ENCODE measurements at regions of chr6 and their contacts with region 1.

Region 1: DNA sequence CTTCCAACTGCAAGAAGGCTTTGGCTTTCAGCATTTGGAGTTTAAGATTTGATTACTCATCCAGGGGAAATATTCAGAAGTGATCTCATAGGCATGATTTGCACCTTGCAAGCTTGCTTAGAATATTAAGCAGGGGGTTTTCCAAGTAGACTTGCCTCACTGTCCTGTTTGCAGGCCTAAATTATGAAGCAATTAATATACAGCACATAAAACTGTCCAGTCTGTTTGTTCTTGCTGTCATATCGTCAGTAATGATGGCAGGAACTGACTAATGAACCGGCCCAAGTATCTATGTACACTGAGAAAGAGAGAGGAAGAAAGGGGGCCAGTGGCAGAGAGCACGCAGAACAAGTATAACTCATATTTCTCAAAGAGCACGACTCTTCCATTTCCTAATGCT is 212.5 kb upstream of the SUPT3H start:
- DNase-seq: no peak
- H3K4me3 Mint-ChIP-seq: no peak overlapping the region
- H3K27ac Mint-ChIP-seq: peak overlapping the region; percentile 53
- H3K4me1 Mint-ChIP-seq: peaks cover 94% of the 10 kb centered on the region
- H3K27me3 Mint-ChIP-seq: no peaks in the 10 kb centered on the region

Region 2: DNA sequence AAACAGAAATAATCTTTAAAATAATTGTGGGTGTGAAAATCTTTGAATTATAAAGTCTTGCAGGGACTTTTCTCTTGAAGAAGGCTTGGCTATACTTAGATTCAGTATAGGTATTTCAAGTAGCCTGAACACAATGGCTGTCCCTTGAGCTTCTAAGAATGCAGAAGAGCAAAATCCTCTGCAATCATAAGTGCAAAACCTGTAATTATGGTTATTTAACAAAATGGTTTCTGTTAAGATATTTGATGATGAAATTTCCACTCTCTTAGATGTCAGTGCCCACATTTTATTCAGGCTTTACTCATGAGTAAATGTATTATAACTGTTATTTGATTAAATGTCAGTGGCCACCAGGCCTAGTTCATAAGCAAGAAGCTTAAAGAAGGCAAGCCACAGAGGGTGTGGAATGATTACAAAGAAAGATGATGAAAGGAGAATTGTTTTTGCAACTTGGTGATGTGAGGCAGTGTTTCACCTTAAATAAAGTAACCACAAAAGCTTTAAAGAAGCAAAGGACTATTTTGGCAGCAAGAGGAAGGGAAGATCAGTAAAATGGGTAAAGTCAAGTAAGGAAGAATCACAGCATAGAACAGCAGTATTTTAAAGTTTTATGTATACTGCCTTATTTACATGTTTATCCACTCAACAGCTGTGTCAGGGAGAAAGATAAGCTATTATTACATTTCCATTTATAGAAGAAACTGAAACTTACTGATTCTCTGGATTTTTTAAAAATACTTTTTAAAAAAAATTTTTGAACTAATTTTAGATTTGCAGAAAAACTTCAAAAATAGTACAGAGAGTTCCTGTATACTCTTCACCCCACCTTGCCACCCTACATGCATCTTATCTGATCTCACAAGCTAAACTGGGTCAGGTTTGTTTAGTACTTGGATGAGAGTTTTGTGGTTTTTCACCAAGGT is 613.2 kb before region 1 on chr6:
- CTCF ChIA-PET with region 1: no interaction called
- POLR2A ChIA-PET with region 1: no interaction called
- intact Hi-C with region 1: no loop called
- DNase-seq: no peak
- H3K4me3 Mint-ChIP-seq: no peak overlapping the region
- H3K27ac Mint-ChIP-seq: peak overlapping the region; percentile 33
- H3K4me1 Mint-ChIP-seq: peaks cover 39% of the 10 kb centered on the region
- H3K27me3 Mint-ChIP-seq: no peaks in the 10 kb centered on the region

Region 3: DNA sequence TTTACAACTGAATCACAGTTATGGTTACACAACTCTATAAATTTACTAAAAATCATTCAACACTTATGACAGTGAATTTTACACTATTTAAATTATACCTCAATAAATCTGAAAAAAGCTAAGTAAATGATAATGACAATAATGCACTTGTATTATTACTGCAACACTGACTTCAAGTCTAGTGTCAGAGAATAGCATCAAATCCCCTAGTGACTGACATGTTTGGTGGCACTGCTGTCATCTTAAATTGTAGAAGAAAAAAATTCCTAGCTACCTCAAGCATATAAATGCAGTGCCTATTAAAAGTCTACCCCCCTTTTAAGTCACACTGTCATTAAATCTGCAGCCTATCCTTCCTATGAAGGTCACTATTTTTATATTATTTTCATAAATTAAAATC is 451.5 kb before region 1 on chr6:
- CTCF ChIA-PET with region 1: no interaction called
- POLR2A ChIA-PET with region 1: no interaction called
- intact Hi-C with region 1: no loop called
- DNase-seq: no peak
- H3K4me3 Mint-ChIP-seq: no peak overlapping the region
- H3K27ac Mint-ChIP-seq: no peak overlapping the region
- H3K4me1 Mint-ChIP-seq: no peaks in the 10 kb centered on the region
- H3K27me3 Mint-ChIP-seq: no peaks in the 10 kb centered on the region

Region 4: GRCh38 chr6:45479834-45480751 is 110.1 kb before region 1 on chr6:
- CTCF ChIA-PET with region 1: no interaction called
- POLR2A ChIA-PET with region 1: no interaction called
- intact Hi-C with region 1: loop called (anchors 1 kb)
- DNase-seq: no peak
- H3K4me3 Mint-ChIP-seq: no peak overlapping the region
- H3K27ac Mint-ChIP-seq: no peak overlapping the region
- H3K4me1 Mint-ChIP-seq: peaks cover 17% of the 10 kb centered on the region
- H3K27me3 Mint-ChIP-seq: no peaks in the 10 kb centered on the region

Region 5: GRCh38 chr6:45812922-45813321 is 222.7 kb after region 1 on chr6:
- CTCF ChIA-PET with region 1: no interaction called
- POLR2A ChIA-PET with region 1: no interaction called
- intact Hi-C with region 1: no loop called
- DNase-seq: no peak
- H3K4me3 Mint-ChIP-seq: no peak overlapping the region
- H3K27ac Mint-ChIP-seq: no peak overlapping the region
- H3K4me1 Mint-ChIP-seq: peaks cover 38% of the 10 kb centered on the region
- H3K27me3 Mint-ChIP-seq: peaks cover 7% of the 10 kb centered on the region

Measured in activated CD4-positive, alpha-beta memory T cell treated with anti-CD3 and anti-CD28 coated beads for 36 hours (primary cell).